ENCODE measurements at regions of chr17 and their contacts with region 1.

Region 1: GRCh38 chr17:12431188-12431587 is 234.5 kb upstream of the MYOCD start:
- DNase-seq: no peak

Region 2: DNA sequence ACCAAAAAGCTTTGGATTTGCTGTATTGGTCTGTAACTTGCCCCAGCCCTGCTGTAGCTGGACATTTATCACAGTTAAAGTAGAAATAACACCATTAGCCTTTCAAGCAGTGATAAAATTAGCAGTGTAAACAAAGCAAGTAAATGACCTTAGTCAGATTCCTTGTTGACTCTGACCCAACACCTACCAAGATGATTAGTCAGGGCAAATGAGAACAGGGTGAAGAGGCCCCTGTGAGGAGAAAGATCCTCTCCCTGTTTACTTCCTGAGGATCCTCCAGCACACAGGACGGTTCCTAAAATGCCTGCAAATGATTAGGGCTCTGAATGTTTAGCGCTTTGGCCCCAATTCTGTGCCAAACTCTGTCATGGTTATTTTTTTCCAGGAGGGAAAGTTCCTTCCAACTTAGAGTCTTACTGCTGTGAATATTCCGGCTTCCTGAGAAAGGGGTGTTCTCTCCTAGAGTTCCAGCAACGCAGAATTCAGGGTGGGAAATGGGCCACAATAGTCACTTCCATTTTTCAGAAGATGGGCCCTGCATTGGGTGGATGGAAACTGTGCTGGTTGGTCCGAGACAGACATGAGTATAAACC is 24.5 kb before region 1 on chr17:
- intact Hi-C with region 1: loop called in 1 of 2 experiments (anchors 1 kb)
- DNase-seq: no peak

Region 3: GRCh38 chr17:12463102-12463501 is 31.9 kb after region 1 on chr17:
- intact Hi-C with region 1: no loop called
- DNase-seq: no peak

Region 4: DNA sequence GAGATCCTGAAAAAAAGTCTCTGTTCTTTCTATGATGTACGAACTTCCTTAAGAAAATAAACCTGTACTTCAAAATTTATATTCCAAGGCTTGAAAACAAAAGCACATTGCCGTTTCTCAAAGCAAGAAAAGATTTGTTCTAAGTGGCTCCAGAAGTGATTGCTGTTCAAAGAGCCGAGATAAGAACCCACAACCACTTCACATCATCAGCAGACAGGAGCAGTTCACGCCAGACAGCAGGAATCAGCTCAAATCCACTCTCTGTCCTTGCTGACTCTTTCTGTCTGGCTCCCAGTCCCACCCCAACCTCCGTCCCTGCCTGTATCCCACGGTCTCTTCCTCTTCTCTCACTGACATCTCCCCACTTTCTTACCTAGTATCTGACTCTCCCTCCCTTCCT is 149.5 kb after region 1 on chr17:
- intact Hi-C with region 1: no loop called
- DNase-seq: no peak